Activated CD4-positive, alpha-beta T cell treated with anti-CD3 and anti-CD28 coated beads, Interleukin-2, amount 10 ng/mL, durations not matched to agents 7 days and 5 days (primary cell): ENCODE measurements at regions of chr12 and their contacts with region 1.

Region 1: DNA sequence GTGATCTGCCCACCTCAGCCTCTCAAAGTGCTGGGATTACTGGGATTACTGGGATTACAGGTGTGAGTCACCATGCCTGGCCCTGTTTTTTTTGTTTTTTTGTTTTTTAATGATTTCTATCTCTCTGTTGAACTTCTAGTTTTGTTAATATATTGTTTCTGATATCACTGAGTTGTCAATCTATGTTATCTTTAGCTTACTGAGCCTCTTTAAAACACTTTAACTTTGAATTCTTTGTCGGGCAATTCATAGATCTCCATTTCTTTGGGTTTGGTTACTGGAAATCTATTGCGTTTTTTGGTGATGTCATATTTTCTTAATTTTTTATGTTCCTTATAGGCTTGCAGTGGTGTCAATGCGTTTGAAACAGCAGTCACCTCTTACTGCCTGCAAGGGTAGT is 9.2 kb upstream of the KLRG1 start:
- DNase-seq: no peak
- H3K4me3 Mint-ChIP-seq: no peak overlapping the region
- H3K27ac Mint-ChIP-seq: no peak overlapping the region
- H3K4me1 Mint-ChIP-seq: no peaks in the 10 kb centered on the region
- H3K27me3 Mint-ChIP-seq: no peaks in the 10 kb centered on the region

Region 2: DNA sequence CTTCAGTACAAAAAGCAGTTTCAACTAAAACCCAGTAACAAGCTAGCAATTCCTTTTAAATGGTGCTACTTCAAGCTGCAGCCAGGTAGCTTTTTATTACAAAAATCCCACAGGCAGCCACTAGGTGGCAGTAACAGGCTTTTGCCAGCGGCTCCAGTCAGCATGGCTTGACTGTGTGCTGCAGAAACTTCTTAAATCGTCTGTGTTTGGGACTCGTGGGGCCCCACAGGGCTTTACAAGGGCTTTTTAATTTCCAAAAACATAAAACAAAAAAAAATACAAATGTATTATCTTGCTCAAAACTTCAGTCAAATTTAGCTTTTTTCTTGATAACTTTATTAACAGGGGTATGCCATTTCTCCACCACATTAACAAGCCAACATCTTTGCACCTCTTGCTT is 435.8 kb before region 1 on chr12:
- CTCF ChIA-PET with region 1: no interaction called
- POLR2A ChIA-PET with region 1: interaction called, 10 read pairs
- DNase-seq: peak; percentile 84
- H3K4me3 Mint-ChIP-seq: no peak overlapping the region
- H3K27ac Mint-ChIP-seq: no peak overlapping the region
- H3K4me1 Mint-ChIP-seq: peaks cover 6% of the 10 kb centered on the region
- H3K27me3 Mint-ChIP-seq: peaks cover 45% of the 10 kb centered on the region